Dorsolateral prefrontal cortex (tissue), 120 donors: ENCODE measurements at regions of chr12 and their contacts with region 1.

Region 1: GRCh38 chr12:62192180-62192902 is 67.9 kb upstream of the USP15 start:
- DNase-seq: peak; percentile 22 to 67 (median 60)
- H3K4me3 ChIP-seq: peak overlapping the region; percentile 36 to 77 (median 65)
- H3K27ac ChIP-seq: peak overlapping the region in 53 of 59 donors; percentile 1 to 89 (median 73)
- H3K27me3 ChIP-seq: peaks cover 0 to 19% (median 7%) of the 10 kb centered on the region in 45 donors
- CTCF ChIP-seq: peak; percentile 52 to 97 (median 84)

Region 2: DNA sequence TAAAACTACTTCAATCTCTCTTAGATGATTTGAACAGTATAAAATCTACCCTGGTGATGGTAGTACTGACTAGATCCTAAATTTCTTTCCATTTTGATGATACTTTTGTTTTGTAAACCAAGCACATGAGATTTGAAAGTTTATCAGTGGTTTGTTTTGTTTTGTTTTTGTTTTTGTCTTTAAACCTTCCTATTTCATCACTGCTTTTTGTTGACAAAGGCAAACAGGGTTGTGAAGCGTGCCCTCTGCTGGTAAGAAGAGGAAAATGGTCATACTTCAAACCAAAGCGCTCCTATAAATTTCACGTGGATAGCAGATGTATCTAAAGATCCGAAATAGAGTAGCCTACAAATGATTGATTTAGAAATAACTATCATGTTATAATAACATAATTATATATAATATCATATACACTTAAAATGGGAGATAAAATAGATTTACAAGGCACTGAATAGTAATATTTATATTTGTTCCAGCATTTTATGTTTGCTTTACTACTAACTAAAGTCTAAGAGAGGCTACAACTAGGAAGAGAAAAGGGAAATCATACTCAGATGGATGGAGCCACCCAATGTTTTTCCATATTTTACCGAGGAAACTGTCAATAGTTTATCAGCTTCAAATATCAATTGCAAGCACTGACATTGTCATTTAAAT is 186.1 kb before region 1 on chr12:
- intact Hi-C with region 1: loop called in 1 of 2 experiments (anchors 10 kb)
- DNase-seq: no peak
- H3K4me3 ChIP-seq: no peak overlapping the region
- H3K27ac ChIP-seq: no peak overlapping the region
- H3K27me3 ChIP-seq: no peaks in the 10 kb centered on the region
- CTCF ChIP-seq: peak; percentile 32 to 77 (median 62)